ENCODE measurements at regions of chr9 and their contacts with region 1.

Region 1: GRCh38 chr9:613771-614347 is 227.6 kb upstream of the DMRT1 start:
- DNase-seq: peak; percentile 8
- ATAC-seq: peak; percentile 100
- H3K4me3 ChIP-seq: no peak overlapping the region
- H3K27ac ChIP-seq: no peak overlapping the region
- H3K4me1 ChIP-seq: no peaks in the 10 kb centered on the region
- H3K27me3 ChIP-seq: no peaks in the 10 kb centered on the region
- CTCF ChIP-seq: peak; percentile 72 to 80 (median 78)
- EP300 ChIP-seq: no peak
- POLR2A ChIP-seq: no peak
- RAD21 ChIP-seq: peak; percentile 68

Region 2: GRCh38 chr9:530681-531080 is 83.2 kb before region 1 on chr9:
- CTCF ChIA-PET with region 1: no interaction called
- POLR2A ChIA-PET with region 1: no interaction called
- RAD21 ChIA-PET with region 1: no interaction called
- SMC1A ChIA-PET with region 1: no interaction called
- in situ Hi-C with region 1: no loop called
- intact Hi-C with region 1: no loop called
- DNase-seq: no peak
- ATAC-seq: no peak
- H3K4me3 ChIP-seq: no peak overlapping the region
- H3K27ac ChIP-seq: no peak overlapping the region
- H3K4me1 ChIP-seq: no peaks in the 10 kb centered on the region
- H3K27me3 ChIP-seq: no peaks in the 10 kb centered on the region; a peak in 1 of 4 replicates
- CTCF ChIP-seq: no peak
- EP300 ChIP-seq: no peak
- POLR2A ChIP-seq: no peak
- RAD21 ChIP-seq: no peak

Region 3: DNA sequence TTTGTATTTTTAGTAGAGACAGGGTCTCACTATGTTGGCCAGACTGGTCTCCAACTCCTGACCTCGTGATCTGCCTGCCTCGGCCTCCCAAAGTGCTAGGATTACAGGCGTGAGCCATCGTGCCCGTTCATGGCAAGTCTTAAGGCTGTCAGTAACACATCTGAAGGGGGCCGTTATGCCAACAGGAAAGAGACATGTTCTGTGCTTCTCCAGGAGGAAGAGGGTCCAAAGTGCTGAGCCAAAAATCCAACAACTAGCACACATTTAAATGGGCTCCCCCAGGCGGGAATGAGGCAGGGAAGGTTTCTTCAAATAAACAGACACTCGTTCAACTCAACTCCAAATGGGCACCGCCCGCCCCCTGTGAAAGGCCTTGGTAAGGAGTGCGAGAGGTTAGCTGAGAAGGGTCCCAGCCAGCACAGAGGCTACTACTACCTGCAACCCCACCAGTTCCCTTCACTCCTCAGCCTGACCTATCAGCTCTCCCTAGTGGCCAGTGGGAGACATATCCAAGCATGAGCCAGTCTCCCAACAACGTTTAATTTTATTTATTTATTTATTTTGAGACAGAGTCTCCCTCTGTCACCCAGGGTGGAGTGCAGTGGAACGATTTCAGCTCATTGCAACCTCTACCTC is 143.5 kb after region 1 on chr9:
- CTCF ChIA-PET with region 1: interaction called, 5 read pairs
- POLR2A ChIA-PET with region 1: no interaction called
- RAD21 ChIA-PET with region 1: no interaction called
- SMC1A ChIA-PET with region 1: no interaction called
- in situ Hi-C with region 1: no loop called
- intact Hi-C with region 1: loop called (anchors 2 kb)
- DNase-seq: no peak
- ATAC-seq: peak; percentile 82
- H3K4me3 ChIP-seq: no peak overlapping the region
- H3K27ac ChIP-seq: no peak overlapping the region
- H3K4me1 ChIP-seq: peaks cover 5% of the 10 kb centered on the region; the same call in 1 of the 2 replicates
- H3K27me3 ChIP-seq: no peaks in the 10 kb centered on the region; a peak in 2 of 4 replicates
- CTCF ChIP-seq: peak in 2 of 3 experiments; percentile 26 to 29; a peak in 2 of 6 replicates
- EP300 ChIP-seq: no peak
- POLR2A ChIP-seq: no peak
- RAD21 ChIP-seq: peak; percentile 30; the same call in 1 of the 2 replicates

Region 4: GRCh38 chr9:763692-764524 is 150.0 kb after region 1 on chr9:
- CTCF ChIA-PET with region 1: interaction called, 5 read pairs
- POLR2A ChIA-PET with region 1: no interaction called
- RAD21 ChIA-PET with region 1: no interaction called
- SMC1A ChIA-PET with region 1: no interaction called
- in situ Hi-C with region 1: no loop called
- intact Hi-C with region 1: loop called (anchors 1 kb)
- DNase-seq: no peak
- ATAC-seq: peak; percentile 98
- H3K4me3 ChIP-seq: no peak overlapping the region
- H3K27ac ChIP-seq: no peak overlapping the region
- H3K4me1 ChIP-seq: no peaks in the 10 kb centered on the region
- H3K27me3 ChIP-seq: peaks cover 0 to 1% of the 10 kb centered on the region in 2 experiments; a peak in 2 of 4 replicates
- CTCF ChIP-seq: peak; percentile 40 to 58 (median 50)
- EP300 ChIP-seq: no peak
- POLR2A ChIP-seq: no peak
- RAD21 ChIP-seq: peak; percentile 19

Region 5: DNA sequence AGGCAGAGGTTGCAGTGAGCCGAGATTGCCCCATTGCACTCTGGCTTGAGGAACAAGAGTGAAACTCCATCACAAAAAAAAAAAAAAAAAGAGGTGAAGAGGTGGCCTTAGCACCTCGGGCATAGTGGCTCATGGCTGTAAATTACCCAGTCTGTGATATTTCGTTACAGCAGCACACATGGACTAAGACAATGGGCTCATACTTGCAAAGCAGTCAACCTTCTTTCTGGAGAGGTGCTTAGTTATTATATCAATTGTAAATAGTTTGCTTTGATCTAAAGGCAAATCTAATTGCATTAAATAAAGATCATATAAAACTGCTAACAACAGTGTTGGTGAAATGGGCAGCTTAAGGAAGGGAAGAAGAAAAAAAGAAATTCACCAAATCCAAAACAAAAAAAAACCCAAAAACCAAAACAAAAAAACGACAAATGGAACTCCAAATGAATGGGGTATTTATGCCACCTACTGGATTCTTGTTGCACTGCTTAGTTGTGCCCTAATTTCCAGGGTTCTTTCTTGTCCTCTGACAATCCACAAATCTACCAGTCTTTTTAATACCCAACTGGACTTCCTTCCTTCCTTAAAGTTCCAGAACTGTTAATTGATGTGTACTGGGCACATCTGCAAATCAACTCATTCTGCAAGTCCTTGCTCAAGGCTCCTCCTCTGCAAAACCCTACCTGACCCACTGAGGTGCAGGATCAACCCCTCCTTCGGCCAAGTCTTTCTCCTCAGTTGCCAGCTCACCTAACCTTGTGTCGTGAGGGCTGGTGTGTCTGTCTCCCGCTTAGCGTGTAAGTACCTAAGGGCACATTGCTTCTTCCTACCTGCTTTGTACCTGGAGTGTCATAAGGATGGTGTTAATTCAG is 192.7 kb after region 1 on chr9:
- CTCF ChIA-PET with region 1: interaction called, 4 read pairs
- POLR2A ChIA-PET with region 1: no interaction called
- RAD21 ChIA-PET with region 1: no interaction called
- SMC1A ChIA-PET with region 1: interaction called, 5 read pairs
- in situ Hi-C with region 1: no loop called
- intact Hi-C with region 1: loop called (anchors 1 kb)
- DNase-seq: peak; percentile 4
- ATAC-seq: peak; percentile 83
- H3K4me3 ChIP-seq: no peak overlapping the region
- H3K27ac ChIP-seq: no peak overlapping the region
- H3K4me1 ChIP-seq: no peaks in the 10 kb centered on the region
- H3K27me3 ChIP-seq: peaks cover 0 to 2% of the 10 kb centered on the region in 2 experiments; a peak in 2 of 4 replicates
- CTCF ChIP-seq: peak; percentile 61 to 73 (median 61)
- EP300 ChIP-seq: no peak
- POLR2A ChIP-seq: no peak
- RAD21 ChIP-seq: peak; percentile 79

Region 6: DNA sequence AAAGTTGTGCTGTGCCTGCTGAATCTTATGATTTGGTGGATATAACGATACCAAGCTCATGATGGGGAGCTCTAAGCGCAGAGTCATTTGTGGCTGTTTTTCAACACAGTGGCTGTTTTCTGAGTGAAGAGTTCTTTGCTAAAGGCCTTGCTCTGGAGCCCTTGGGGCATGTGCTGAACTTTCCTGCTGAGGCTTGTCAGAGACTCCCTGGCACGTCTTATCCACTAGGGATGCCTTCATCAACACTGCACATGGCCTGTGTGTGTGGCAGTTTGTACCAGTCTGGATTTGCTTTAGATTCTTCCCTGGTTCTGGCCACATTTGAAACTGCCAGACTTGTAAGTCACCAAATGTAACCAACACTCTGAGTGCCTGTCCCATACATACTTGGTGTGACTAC is 624.5 kb after region 1 on chr9:
- CTCF ChIA-PET with region 1: no interaction called
- POLR2A ChIA-PET with region 1: no interaction called
- RAD21 ChIA-PET with region 1: no interaction called
- SMC1A ChIA-PET with region 1: no interaction called
- in situ Hi-C with region 1: no loop called
- intact Hi-C with region 1: no loop called
- DNase-seq: no peak
- ATAC-seq: no peak
- H3K4me3 ChIP-seq: no peak overlapping the region
- H3K27ac ChIP-seq: no peak overlapping the region
- H3K4me1 ChIP-seq: no peaks in the 10 kb centered on the region
- H3K27me3 ChIP-seq: no peaks in the 10 kb centered on the region
- CTCF ChIP-seq: no peak
- EP300 ChIP-seq: no peak
- POLR2A ChIP-seq: no peak
- RAD21 ChIP-seq: no peak